GM10248 (cell line): ENCODE measurements at regions of chr2 and their contacts with region 1.

Region 1: DNA sequence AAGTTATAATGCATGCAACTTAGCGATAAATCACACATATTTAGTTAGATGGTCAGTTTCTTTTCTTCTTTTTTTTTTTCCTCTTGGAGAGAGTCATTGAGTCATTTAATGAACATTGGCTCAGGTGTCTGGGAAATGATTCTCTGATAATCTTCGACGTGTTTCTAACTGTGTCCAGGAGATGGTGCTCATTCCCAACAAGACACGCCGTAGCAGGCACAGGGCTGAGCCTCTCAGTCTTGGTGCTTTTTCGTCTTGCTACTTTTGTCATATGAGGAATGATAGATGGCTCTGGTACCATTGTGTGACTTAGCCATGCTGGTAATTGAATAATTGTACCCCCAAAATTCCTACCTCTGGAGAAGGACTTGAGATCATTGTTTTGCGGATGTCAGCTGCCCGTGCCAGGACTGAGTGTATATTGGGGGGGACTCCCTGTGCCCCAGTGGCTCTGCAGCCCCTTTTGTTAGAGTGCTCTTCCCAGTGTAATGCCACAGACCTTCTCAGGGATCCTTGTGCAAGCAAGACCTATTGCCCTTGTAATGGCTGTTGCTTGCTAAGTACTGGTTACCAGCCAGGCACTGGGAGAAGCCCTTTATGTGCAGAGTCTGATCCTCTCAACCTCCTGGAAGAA is 107.6 kb upstream of the CYRIA start:
- DNase-seq: peak; percentile 43
- CTCF ChIP-seq: peak; percentile 60

Region 2: GRCh38 chr2:16713011-16713423 is 60.2 kb before region 1 on chr2:
- CTCF ChIA-PET with region 1: no interaction called
- POLR2A ChIA-PET with region 1: no interaction called
- DNase-seq: no peak
- CTCF ChIP-seq: no peak

Region 3: DNA sequence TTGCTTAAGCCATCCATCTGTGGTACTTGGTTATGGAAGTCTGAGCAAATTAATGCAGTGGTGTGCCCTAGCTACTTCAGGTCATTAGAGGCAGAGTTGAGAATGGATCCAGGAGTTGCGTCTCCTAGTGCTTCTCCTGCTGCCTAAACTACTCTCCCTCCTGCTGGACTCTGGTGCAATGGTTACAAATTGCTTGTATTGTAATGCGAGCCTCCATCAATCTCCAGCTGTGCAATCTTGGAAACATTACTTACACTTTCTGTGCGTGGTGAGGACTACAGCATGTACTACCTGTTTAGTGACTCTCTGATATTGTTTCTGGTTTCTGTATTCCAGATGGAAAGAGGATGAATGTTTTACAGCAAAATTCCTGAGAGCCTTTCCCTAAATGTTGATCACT is 11.5 kb after region 1 on chr2:
- CTCF ChIA-PET with region 1: interaction called, 10 read pairs
- POLR2A ChIA-PET with region 1: no interaction called
- DNase-seq: no peak
- CTCF ChIP-seq: no peak